HEK293 (cell line): ENCODE measurements at regions of chr14 and their contacts with region 1.

Region 1: GRCh38 chr14:73851644-73852382 is at the start of gene PTGR2:
- H3K4me3 ChIP-seq: peak within 1 kb of the TSS; percentile 70
- H3K27ac ChIP-seq: peak within 1 kb of the TSS; percentile 55
- H3K4me1 ChIP-seq: no peaks in the 10 kb centered on the region; the same call in 1 of the 2 replicates
- CTCF ChIP-seq: no peak

Region 2: GRCh38 chr14:73886449-73887317 is 34.9 kb after region 1 on chr14 and contains the start of gene ZNF410:
- CTCF ChIA-PET with region 1: no interaction called
- POLR2A ChIA-PET with region 1: interaction called, 29 read pairs
- H3K4me3 ChIP-seq: peak within 1 kb of the TSS; percentile 91
- H3K27ac ChIP-seq: peak within 1 kb of the TSS; percentile 86
- H3K4me1 ChIP-seq: no peaks in the 10 kb centered on the region; the same call in 1 of the 2 replicates
- CTCF ChIP-seq: no peak

Region 3: GRCh38 chr14:74080820-74081460 is 229.1 kb after region 1 on chr14:
- CTCF ChIA-PET with region 1: no interaction called
- POLR2A ChIA-PET with region 1: no interaction called
- H3K4me3 ChIP-seq: no peak overlapping the region
- H3K27ac ChIP-seq: no peak overlapping the region
- H3K4me1 ChIP-seq: peaks cover 6% of the 10 kb centered on the region; the same call in 1 of the 2 replicates
- CTCF ChIP-seq: no peak